ENCODE measurements at regions of chr7 and their contacts with region 1.

Region 1: GRCh38 chr7:7982904-7983303 is 14.3 kb downstream of the GLCCI1 start:
- DNase-seq: peak; percentile 61
- ATAC-seq: peak; percentile 90
- H3K4me3 ChIP-seq: no peak overlapping the region
- H3K27ac ChIP-seq: peak overlapping the region; percentile 24; the same call in 1 of the 2 replicates
- H3K4me1 ChIP-seq: peaks cover 20% of the 10 kb centered on the region
- H3K27me3 ChIP-seq: no peaks in the 10 kb centered on the region
- CTCF ChIP-seq: no peak

Region 2: GRCh38 chr7:7795203-7796135 is 187.4 kb before region 1 on chr7:
- CTCF ChIA-PET with region 1: no interaction called
- POLR2A ChIA-PET with region 1: no interaction called
- intact Hi-C with region 1: no loop called
- DNase-seq: peak; percentile 94
- ATAC-seq: peak; percentile 90
- H3K4me3 ChIP-seq: no peak overlapping the region
- H3K27ac ChIP-seq: peak overlapping the region; percentile 94
- H3K4me1 ChIP-seq: peaks cover 40% of the 10 kb centered on the region
- H3K27me3 ChIP-seq: no peaks in the 10 kb centered on the region
- CTCF ChIP-seq: no peak

Region 3: GRCh38 chr7:7996576-7996975 is 13.7 kb after region 1 on chr7:
- CTCF ChIA-PET with region 1: no interaction called
- POLR2A ChIA-PET with region 1: no interaction called
- intact Hi-C with region 1: loop called (anchors 2 kb)
- DNase-seq: peak; percentile 95
- ATAC-seq: peak; percentile 99
- H3K4me3 ChIP-seq: peak overlapping the region; percentile 44; the same call in 1 of the 2 replicates
- H3K27ac ChIP-seq: peak overlapping the region; percentile 67
- H3K4me1 ChIP-seq: peaks cover 15% of the 10 kb centered on the region
- H3K27me3 ChIP-seq: no peaks in the 10 kb centered on the region
- CTCF ChIP-seq: no peak